ENCODE measurements at regions of chr2 and their contacts with region 1.

Region 1: DNA sequence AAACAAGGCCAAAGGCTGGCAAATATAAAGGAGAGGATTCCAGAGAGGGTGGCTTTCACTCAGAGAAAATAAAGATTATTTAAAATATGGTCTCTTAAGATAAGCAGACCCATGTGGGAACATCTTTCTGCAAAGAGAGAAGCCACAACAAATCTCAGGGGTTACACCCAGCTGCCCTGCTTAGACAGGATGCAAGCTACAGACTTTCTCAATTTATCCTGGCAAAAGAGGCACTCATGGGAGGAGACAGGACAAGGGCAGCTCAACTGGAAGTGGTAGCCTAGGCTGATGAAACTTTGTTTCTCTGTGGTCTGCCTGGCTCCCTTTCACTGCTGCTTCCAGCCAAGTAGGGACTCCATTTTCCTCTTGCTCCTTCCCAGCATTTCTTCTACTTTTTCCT is 25.9 kb upstream of the SULT1C4 start:
- DNase-seq: no peak
- ATAC-seq: no peak
- H3K4me3 ChIP-seq: no peak overlapping the region
- H3K27ac ChIP-seq: no peak overlapping the region
- H3K4me1 ChIP-seq: no peaks in the 10 kb centered on the region
- H3K27me3 ChIP-seq: peaks cover 0 to 5% of the 10 kb centered on the region in 2 experiments; a peak in 2 of 5 replicates
- CTCF ChIP-seq: no peak
- EP300 ChIP-seq: no peak
- POLR2A ChIP-seq: no peak
- RAD21 ChIP-seq: no peak

Region 2: DNA sequence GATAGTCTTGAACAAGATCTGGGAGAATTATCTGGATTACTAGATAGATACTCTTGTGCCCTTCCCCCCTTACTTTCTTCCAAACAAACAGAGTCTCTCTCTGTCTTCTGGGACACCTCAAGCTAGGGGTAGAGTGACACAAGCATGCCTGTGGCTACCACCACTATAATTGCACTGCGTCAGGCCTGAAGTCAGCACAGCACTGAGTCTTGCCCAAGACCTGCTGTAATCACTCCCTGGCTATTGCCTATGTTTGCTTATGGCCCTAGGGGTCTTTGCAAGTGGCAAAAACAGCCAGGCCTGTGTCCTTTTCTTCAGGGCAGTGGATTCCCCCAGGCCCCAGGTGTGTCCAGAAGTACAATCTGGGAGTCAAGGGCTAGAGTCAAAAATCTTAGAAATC is 259.0 kb before region 1 on chr2:
- CTCF ChIA-PET with region 1: no interaction called
- POLR2A ChIA-PET with region 1: no interaction called
- in situ Hi-C with region 1: no loop called
- intact Hi-C with region 1: no loop called
- DNase-seq: no peak
- ATAC-seq: no peak
- H3K4me3 ChIP-seq: no peak overlapping the region
- H3K27ac ChIP-seq: no peak overlapping the region
- H3K4me1 ChIP-seq: no peaks in the 10 kb centered on the region
- H3K27me3 ChIP-seq: no peaks in the 10 kb centered on the region
- CTCF ChIP-seq: no peak
- EP300 ChIP-seq: no peak
- POLR2A ChIP-seq: no peak
- RAD21 ChIP-seq: no peak

Region 3: GRCh38 chr2:108215794-108216211 is 136.1 kb before region 1 on chr2:
- CTCF ChIA-PET with region 1: no interaction called
- POLR2A ChIA-PET with region 1: no interaction called
- in situ Hi-C with region 1: no loop called
- intact Hi-C with region 1: loop called (anchors 2 kb)
- DNase-seq: peak; percentile 55
- ATAC-seq: peak; percentile 98
- H3K4me3 ChIP-seq: peak overlapping the region; percentile 19 to 55 (median 19); a peak in 3 of 6 replicates
- H3K27ac ChIP-seq: no peak overlapping the region
- H3K4me1 ChIP-seq: peaks cover 22% of the 10 kb centered on the region
- H3K27me3 ChIP-seq: no peaks in the 10 kb centered on the region
- CTCF ChIP-seq: peak; percentile 84
- EP300 ChIP-seq: no peak
- POLR2A ChIP-seq: no peak
- RAD21 ChIP-seq: peak; percentile 67

Region 4: GRCh38 chr2:108396845-108397244 is 45.0 kb after region 1 on chr2:
- CTCF ChIA-PET with region 1: interaction called, 7 read pairs
- POLR2A ChIA-PET with region 1: no interaction called
- in situ Hi-C with region 1: no loop called
- intact Hi-C with region 1: loop called (anchors 1 kb)
- DNase-seq: peak; percentile 57
- ATAC-seq: peak; percentile 59; the same call in 2 of the 3 replicates
- H3K4me3 ChIP-seq: no peak overlapping the region
- H3K27ac ChIP-seq: no peak overlapping the region
- H3K4me1 ChIP-seq: peaks cover 3% of the 10 kb centered on the region
- H3K27me3 ChIP-seq: 0 out of 5 replicates have a peak, but pooled peaks cover 0 to 5% of the 10 kb centered on the region in 2 experiments
- CTCF ChIP-seq: peak; percentile 63
- EP300 ChIP-seq: no peak
- POLR2A ChIP-seq: no peak
- RAD21 ChIP-seq: no peak

Region 5: DNA sequence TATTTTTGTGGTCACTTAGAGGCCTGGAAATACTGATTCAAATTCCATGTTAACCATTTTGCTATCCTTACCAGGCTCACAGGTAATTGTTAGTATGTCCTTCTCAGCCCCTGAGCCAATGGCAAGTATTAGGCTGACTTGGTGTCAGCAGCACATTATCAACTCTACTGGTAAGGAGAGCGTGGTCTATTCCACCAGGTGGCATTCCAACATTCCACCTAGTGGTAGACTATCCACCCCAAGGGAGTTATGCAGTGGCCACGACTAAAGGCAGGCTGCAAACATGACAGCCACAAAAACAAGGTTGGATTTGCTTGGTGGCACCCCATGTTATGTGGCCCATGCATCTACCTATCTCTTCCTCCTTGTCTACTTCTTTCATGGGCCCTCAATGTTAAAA is 65.4 kb after region 1 on chr2:
- CTCF ChIA-PET with region 1: interaction called, 15 read pairs
- POLR2A ChIA-PET with region 1: no interaction called
- in situ Hi-C with region 1: no loop called
- intact Hi-C with region 1: loop called (anchors 1 kb)
- DNase-seq: peak; percentile 80
- ATAC-seq: peak; percentile 100
- H3K4me3 ChIP-seq: no peak overlapping the region
- H3K27ac ChIP-seq: no peak overlapping the region
- H3K4me1 ChIP-seq: peaks cover 23% of the 10 kb centered on the region
- H3K27me3 ChIP-seq: no peaks in the 10 kb centered on the region
- CTCF ChIP-seq: peak; percentile 93
- EP300 ChIP-seq: no peak
- POLR2A ChIP-seq: no peak
- RAD21 ChIP-seq: peak; percentile 84

Region 6: DNA sequence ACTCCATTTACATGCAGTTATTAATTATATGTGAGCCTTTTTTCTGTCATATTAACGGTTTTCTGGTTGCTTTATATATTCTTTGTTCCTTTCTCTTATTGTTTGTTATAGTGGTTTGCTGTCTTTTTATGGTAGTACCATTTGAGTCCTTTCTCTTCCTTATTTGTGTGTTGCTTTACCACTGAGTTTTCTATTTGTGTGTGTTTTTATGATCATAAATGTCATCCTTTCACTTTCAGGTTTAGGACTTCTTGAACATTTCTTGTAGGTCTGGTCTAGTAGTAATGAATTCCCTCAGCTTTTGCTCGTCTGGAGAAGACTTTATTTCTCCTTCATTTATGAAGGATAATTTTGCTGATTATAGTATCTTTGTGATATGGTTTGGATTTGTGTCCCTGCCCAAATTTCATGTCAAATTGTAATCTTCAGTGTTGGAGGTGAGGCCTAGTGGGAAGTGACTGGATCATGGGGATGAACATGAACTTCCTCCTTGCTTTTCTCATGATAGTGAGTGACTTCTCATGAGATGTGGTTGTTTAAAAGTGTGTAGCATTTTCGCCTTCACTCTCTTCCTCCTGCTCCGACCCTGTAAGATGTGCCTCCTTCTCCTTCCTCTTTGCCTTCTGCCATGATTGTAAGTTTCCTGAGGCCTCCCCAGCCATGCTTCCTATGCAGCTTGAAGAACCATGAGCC is 108.6 kb after region 1 on chr2:
- CTCF ChIA-PET with region 1: no interaction called
- POLR2A ChIA-PET with region 1: no interaction called
- in situ Hi-C with region 1: no loop called
- intact Hi-C with region 1: loop called (anchors 1 kb)
- DNase-seq: no peak
- ATAC-seq: no peak
- H3K4me3 ChIP-seq: no peak overlapping the region
- H3K27ac ChIP-seq: no peak overlapping the region
- H3K4me1 ChIP-seq: no peaks in the 10 kb centered on the region
- H3K27me3 ChIP-seq: no peaks in the 10 kb centered on the region
- CTCF ChIP-seq: no peak
- EP300 ChIP-seq: no peak
- POLR2A ChIP-seq: no peak
- RAD21 ChIP-seq: no peak

Region 7: DNA sequence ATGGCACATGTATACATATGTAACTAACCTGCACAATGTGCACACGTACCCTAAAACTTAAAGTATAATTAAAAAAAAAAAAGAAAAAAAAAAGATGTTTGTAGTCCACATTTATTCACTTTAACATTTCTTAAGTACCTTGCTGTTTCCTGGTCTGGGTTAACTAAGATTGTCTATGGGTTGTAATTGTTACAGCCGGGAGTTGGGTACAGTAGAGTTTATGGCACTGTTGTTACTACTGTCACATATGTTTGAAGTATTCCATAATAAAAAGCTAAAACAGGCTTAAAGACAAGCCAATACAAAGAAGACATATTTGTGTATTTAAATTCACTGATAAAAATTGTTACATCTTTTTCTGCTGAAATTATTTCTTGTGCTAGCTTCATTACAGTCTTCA is 133.4 kb after region 1 on chr2:
- CTCF ChIA-PET with region 1: no interaction called
- POLR2A ChIA-PET with region 1: no interaction called
- in situ Hi-C with region 1: no loop called
- intact Hi-C with region 1: no loop called
- DNase-seq: no peak
- ATAC-seq: no peak
- H3K4me3 ChIP-seq: no peak overlapping the region
- H3K27ac ChIP-seq: no peak overlapping the region
- H3K4me1 ChIP-seq: no peaks in the 10 kb centered on the region
- H3K27me3 ChIP-seq: no peaks in the 10 kb centered on the region
- CTCF ChIP-seq: no peak
- EP300 ChIP-seq: no peak
- POLR2A ChIP-seq: no peak
- RAD21 ChIP-seq: no peak

Region 8: GRCh38 chr2:108637304-108637669 is 285.4 kb after region 1 on chr2:
- CTCF ChIA-PET with region 1: interaction called, 9 read pairs
- POLR2A ChIA-PET with region 1: no interaction called
- in situ Hi-C with region 1: no loop called
- intact Hi-C with region 1: loop called (anchors 5 kb)
- DNase-seq: peak; percentile 75
- ATAC-seq: peak; percentile 78
- H3K4me3 ChIP-seq: no peak overlapping the region
- H3K27ac ChIP-seq: peak overlapping the region; percentile 19
- H3K4me1 ChIP-seq: peaks cover 37% of the 10 kb centered on the region
- H3K27me3 ChIP-seq: no peaks in the 10 kb centered on the region
- CTCF ChIP-seq: no peak
- EP300 ChIP-seq: no peak
- POLR2A ChIP-seq: no peak
- RAD21 ChIP-seq: no peak